Endothelial cell of umbilical vein (primary cell): ENCODE measurements at regions of chr10 and their contacts with region 1.

Region 1: DNA sequence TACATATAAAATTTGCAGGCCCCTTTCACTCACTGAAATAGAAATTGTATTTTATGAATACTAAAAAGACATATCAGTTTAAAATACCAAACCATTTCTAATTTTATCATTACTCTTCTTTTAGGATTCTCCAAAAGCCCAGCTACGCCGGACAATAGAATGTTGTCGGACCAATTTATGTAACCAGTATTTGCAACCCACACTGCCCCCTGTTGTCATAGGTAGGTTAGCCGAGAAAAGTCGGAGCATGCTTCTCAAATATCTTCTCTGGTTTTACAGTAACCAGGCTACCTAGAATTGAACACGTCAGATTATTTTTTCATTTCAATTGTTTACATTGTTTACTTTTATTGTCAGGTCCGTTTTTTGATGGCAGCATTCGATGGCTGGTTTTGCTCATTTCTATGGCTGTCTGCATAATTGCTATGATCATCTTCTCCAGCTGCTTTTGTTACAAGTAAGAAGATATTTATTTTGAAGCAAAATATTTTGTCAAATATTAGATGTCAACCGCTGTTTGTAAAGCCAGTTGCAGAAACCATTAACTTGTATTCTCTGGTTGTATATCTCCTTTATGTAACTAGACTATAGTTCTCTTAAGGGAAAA is 57.6 kb downstream of the MMRN2 start:
- DNase-seq: peak; percentile 70
- H3K4me3 ChIP-seq: no peak overlapping the region
- H3K27ac ChIP-seq: no peak overlapping the region
- H3K4me1 ChIP-seq: no peaks in the 10 kb centered on the region
- H3K27me3 ChIP-seq: peaks cover 44 to 67% of the 10 kb centered on the region in 2 experiments
- CTCF ChIP-seq: peak; percentile 59 to 63
- POLR2A ChIP-seq: no peak

Region 2: GRCh38 chr10:86688398-86688921 is 211.3 kb before region 1 on chr10:
- CTCF ChIA-PET with region 1: interaction called, 129 read pairs
- POLR2A ChIA-PET with region 1: no interaction called
- dilution Hi-C with region 1: no loop called
- intact Hi-C with region 1: loop called (anchors 1 kb)
- DNase-seq: peak; percentile 52
- H3K4me3 ChIP-seq: no peak overlapping the region
- H3K27ac ChIP-seq: no peak overlapping the region
- H3K4me1 ChIP-seq: no peaks in the 10 kb centered on the region
- H3K27me3 ChIP-seq: peaks cover 30 to 43% of the 10 kb centered on the region in 2 experiments
- CTCF ChIP-seq: peak; percentile 74 to 76
- POLR2A ChIP-seq: no peak

Region 3: DNA sequence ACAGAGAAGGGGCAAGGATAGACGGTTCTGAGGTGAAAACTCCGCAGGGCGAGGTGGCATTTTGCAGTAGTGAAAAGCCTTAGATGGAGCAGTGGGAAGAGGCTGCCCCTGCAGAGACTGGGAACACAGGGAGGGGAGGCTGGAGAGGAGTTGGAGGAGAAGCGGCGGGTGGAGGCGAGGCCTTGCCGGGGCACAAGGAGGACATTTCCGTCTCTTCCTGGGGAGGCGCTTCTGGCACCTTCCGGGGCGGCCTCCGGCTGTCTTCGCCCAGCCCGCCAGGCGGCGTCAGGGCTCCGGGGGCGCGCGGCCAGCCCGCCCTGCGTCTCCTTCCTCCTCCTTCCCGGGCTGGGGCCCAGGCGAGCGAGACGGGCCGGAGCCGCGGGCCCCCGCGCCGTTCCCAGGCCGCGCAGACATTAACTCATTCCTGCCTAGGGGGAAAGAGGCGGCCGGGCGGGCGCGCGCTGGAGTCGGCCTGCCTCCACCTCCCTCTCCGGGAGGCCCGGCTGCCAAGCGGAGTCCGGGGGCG is 188.7 kb before region 1 on chr10:
- CTCF ChIA-PET with region 1: interaction called, 16 read pairs
- POLR2A ChIA-PET with region 1: no interaction called
- dilution Hi-C with region 1: no loop called
- intact Hi-C with region 1: loop called (anchors 1 kb)
- DNase-seq: peak; percentile 28
- H3K4me3 ChIP-seq: peak overlapping the region in 2 of 3 experiments; percentile 9 to 34
- H3K27ac ChIP-seq: no peak overlapping the region
- H3K4me1 ChIP-seq: no peaks in the 10 kb centered on the region
- H3K27me3 ChIP-seq: peaks cover 41 to 59% of the 10 kb centered on the region in 2 experiments
- CTCF ChIP-seq: peak; percentile 43 to 69
- POLR2A ChIP-seq: no peak

Region 4: GRCh38 chr10:86755740-86756510 is 143.8 kb before region 1 on chr10:
- CTCF ChIA-PET with region 1: interaction called, 13 read pairs
- POLR2A ChIA-PET with region 1: no interaction called
- dilution Hi-C with region 1: no loop called
- intact Hi-C with region 1: no loop called
- DNase-seq: no peak
- H3K4me3 ChIP-seq: peak overlapping the region in 2 of 3 experiments; percentile 2 to 26
- H3K27ac ChIP-seq: no peak overlapping the region
- H3K4me1 ChIP-seq: peaks cover 3% of the 10 kb centered on the region
- H3K27me3 ChIP-seq: peaks cover 73 to 85% of the 10 kb centered on the region in 2 experiments
- CTCF ChIP-seq: no peak
- POLR2A ChIP-seq: no peak

Region 5: GRCh38 chr10:86888585-86889381 is 11.0 kb before region 1 on chr10:
- CTCF ChIA-PET with region 1: interaction called, 14 read pairs
- POLR2A ChIA-PET with region 1: no interaction called
- dilution Hi-C with region 1: no loop called
- intact Hi-C with region 1: no loop called
- DNase-seq: peak; percentile 51
- H3K4me3 ChIP-seq: no peak overlapping the region
- H3K27ac ChIP-seq: no peak overlapping the region
- H3K4me1 ChIP-seq: no peaks in the 10 kb centered on the region
- H3K27me3 ChIP-seq: peaks cover 18 to 24% of the 10 kb centered on the region in 2 experiments
- CTCF ChIP-seq: no peak
- POLR2A ChIP-seq: no peak

Region 6: GRCh38 chr10:86979977-86980795 is 80.4 kb after region 1 on chr10:
- CTCF ChIA-PET with region 1: no interaction called
- POLR2A ChIA-PET with region 1: no interaction called
- dilution Hi-C with region 1: no loop called
- intact Hi-C with region 1: no loop called
- DNase-seq: no peak
- H3K4me3 ChIP-seq: no peak overlapping the region
- H3K27ac ChIP-seq: no peak overlapping the region
- H3K4me1 ChIP-seq: no peaks in the 10 kb centered on the region
- H3K27me3 ChIP-seq: peaks cover 2 to 3% of the 10 kb centered on the region in 2 experiments
- CTCF ChIP-seq: no peak
- POLR2A ChIP-seq: no peak